ENCODE measurements at regions of chr6 and their contacts with region 1.

Region 1: DNA sequence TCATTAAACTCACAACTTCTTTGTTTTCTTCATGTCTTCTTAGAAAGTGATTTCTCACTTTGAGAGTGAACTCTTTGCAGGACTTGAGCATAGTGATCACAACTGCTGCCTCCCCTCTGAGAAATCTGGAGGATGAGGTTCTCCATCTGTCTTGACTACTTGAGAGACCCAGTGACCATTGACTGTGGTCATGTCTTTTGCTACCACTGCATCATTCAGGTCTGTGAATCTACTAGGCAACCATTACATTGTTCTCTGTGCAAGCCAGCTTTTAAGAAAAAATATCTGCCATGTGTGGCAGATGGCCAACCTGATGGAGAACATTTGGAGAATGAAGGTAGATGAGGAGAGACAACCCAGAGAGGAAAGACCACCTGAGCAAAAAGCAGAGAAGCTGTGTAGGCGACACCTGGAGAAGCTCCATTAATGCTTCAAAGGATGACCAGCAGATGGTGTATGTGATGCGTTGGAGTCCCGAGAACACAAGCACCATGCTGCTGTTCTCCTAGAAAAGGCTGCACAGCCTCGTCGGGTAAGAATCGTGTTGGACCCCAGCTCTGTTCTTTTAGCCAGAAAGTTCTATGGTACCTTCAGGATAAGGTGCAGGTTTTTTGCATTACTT is 25.1 kb upstream of the TRIM26 start:
- DNase-seq: no peak
- H3K4me3 ChIP-seq: no peak overlapping the region
- CTCF ChIP-seq: peak; percentile 33

Region 2: DNA sequence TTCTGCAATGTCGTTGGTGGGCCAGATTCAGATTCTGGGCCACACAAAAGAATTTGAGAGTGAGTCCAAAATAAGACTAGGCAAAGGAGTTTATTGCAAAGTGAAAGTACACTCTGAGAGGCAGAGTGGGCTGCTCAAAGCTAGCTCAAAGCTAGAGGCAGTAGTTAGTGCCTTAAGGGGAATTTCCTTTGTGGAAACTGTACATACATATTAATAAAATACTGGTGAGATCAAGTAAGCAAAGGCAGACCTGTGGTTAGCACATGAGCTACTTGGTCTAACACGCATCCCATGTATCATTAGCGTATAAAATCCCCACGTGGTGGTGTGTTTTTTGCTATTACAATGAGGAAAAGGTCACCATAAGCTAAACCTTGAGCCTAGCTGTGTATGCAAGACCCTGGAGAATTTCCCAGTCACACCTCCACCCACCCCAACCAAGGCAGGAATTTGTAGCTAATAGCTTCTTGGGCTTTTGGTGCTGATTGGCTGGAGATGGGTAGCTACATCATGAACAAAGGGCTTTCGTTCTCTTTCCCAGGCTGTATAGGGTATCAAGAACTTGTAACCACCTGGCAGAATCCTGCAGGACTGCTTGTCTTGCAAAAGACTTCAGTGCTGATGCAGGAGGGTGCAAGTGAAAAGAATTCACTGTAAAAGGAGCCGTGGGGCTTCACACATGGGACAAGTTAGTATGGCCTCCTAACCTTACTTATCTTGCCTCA is 10.4 kb before region 1 on chr6:
- CTCF ChIA-PET with region 1: interaction called, 17 read pairs
- POLR2A ChIA-PET with region 1: no interaction called
- DNase-seq: no peak
- H3K4me3 ChIP-seq: no peak overlapping the region
- CTCF ChIP-seq: no peak

Region 3: GRCh38 chr6:30386166-30386565 is 147.9 kb after region 1 on chr6:
- CTCF ChIA-PET with region 1: no interaction called
- POLR2A ChIA-PET with region 1: no interaction called
- DNase-seq: no peak
- H3K4me3 ChIP-seq: no peak overlapping the region
- CTCF ChIP-seq: no peak

Measured in AG04449 (cell line).